Caco-2 (cell line): ENCODE measurements at regions of chr2 and their contacts with region 1.

Region 1: DNA sequence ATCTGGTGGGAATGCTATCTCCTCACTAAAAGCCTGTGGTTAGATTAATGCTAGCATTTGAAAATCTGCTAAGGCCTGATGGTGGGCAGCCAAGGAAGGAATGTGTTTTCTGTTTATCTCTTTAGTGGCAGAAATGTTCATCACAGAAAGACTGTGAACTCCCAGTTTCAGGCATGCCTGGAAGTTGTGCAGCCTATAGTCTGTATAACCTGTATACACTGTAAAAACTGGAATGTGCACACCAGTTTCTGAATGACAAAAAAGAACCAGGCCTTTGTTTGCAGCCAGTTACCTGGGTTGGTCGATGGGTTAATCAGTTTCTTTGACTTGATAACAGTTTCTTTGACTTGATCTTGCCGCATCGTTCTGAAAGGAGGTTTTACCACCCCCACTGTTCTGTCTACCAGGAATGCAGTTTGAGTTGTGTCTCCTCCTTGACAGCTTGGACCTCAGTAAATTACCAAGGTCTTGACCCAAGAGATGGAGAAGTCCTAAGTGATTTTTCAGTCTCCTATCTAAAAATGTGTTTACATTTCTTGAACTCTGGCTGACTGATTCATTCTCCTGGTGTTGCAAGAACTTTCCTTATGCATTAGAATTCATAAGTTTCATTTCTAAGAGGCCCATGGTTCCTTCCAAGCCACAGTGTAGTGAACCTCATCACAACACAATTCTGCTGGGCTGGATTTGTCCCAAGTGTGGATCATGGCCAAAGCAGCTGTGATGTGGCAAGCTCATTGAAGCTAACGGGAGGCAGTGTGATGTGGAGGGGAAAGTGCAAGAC is 62.2 kb downstream of the KIAA2012 start:
- DNase-seq: peak; percentile 92 to 94
- H3K4me3 ChIP-seq: no peak overlapping the region
- H3K4me3 Mint-ChIP-seq: peak overlapping the region; percentile 61
- H3K27ac Mint-ChIP-seq: peak overlapping the region; percentile 95
- H3K4me1 ChIP-seq: peaks cover 36% of the 10 kb centered on the region
- H3K4me1 Mint-ChIP-seq: peaks cover 24% of the 10 kb centered on the region
- H3K27me3 ChIP-seq: no peaks in the 10 kb centered on the region
- H3K27me3 Mint-ChIP-seq: no peaks in the 10 kb centered on the region
- CTCF ChIP-seq: peak in 1 of 2 experiments; percentile 18

Region 2: DNA sequence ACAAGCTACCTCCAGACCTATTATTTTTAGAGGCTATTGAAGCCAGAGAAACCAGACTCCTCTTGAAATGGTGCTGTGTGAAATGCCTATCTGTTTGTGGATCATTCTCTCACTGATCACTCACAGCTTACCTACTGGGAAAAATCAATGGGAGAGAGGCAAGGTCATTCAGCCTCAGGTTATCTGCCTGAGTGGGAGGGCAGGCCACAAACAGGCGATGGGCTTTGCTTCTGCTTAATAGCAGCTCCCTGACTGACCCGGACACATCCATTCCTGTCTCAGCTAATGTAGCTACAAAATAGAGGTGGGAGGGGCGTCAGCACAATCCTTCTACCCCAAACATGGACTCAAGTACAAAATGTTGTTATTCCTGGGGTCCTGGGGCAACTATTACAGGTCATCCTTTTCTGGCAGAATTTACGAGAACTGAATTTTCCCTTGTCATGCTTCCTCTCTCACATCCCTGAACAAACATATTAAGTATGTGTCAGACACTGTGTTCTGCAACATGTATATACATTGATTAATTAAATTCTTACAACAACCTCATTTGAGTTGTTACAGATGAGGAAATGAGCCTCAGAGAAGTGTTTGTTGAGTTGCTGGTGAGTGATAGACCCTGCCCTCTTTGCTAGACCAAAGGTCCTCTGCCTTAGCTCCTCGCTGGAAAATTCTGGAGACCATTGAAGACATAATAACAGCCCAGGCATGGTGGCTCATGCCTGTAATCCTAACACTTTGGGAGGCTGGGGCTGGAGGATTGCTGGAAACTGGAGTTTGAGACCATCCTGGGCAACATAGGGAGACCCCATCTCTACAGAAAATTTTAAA is 268.4 kb before region 1 on chr2:
- CTCF ChIA-PET with region 1: no interaction called
- POLR2A ChIA-PET with region 1: interaction called, 3 read pairs
- intact Hi-C with region 1: loop called (anchors 1 kb)
- DNase-seq: peak; percentile 43 to 75
- H3K4me3 ChIP-seq: no peak overlapping the region
- H3K4me3 Mint-ChIP-seq: peak overlapping the region; percentile 43
- H3K27ac Mint-ChIP-seq: peak overlapping the region; percentile 80
- H3K4me1 ChIP-seq: peaks cover 33% of the 10 kb centered on the region
- H3K4me1 Mint-ChIP-seq: peaks cover 36% of the 10 kb centered on the region
- H3K27me3 ChIP-seq: no peaks in the 10 kb centered on the region
- H3K27me3 Mint-ChIP-seq: no peaks in the 10 kb centered on the region
- CTCF ChIP-seq: no peak

Region 3: GRCh38 chr2:201971531-201972228 is 163.6 kb before region 1 on chr2:
- CTCF ChIA-PET with region 1: no interaction called
- POLR2A ChIA-PET with region 1: no interaction called
- intact Hi-C with region 1: no loop called
- DNase-seq: no peak
- H3K4me3 ChIP-seq: no peak overlapping the region
- H3K4me3 Mint-ChIP-seq: no peak overlapping the region
- H3K27ac Mint-ChIP-seq: no peak overlapping the region
- H3K4me1 ChIP-seq: peaks cover 34% of the 10 kb centered on the region
- H3K4me1 Mint-ChIP-seq: peaks cover 30% of the 10 kb centered on the region
- H3K27me3 ChIP-seq: no peaks in the 10 kb centered on the region
- H3K27me3 Mint-ChIP-seq: no peaks in the 10 kb centered on the region
- CTCF ChIP-seq: no peak

Region 4: DNA sequence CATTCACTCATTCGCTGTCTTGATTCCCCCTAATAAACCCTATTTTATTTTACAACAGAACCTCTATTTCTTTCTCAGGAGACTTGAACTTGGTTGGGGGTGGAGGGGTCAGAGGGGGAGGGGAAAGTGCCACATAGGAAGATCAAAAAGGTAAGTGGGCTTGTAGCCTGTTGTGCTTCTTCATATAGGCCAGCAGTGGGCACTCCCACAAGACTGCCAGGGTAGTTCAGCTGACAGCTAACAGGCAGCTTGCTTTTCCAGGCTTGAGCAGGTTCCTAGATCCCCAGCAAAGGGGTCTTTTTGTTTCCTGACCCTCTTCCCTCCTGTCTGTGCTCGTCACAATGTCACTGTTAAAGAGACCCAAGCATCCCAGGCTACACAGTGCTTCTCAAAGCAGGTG is 63.1 kb before region 1 on chr2:
- CTCF ChIA-PET with region 1: no interaction called
- POLR2A ChIA-PET with region 1: no interaction called
- intact Hi-C with region 1: loop called (anchors 1 kb)
- DNase-seq: peak in 1 of 2 experiments; percentile 18
- H3K4me3 ChIP-seq: no peak overlapping the region
- H3K4me3 Mint-ChIP-seq: no peak overlapping the region
- H3K27ac Mint-ChIP-seq: no peak overlapping the region
- H3K4me1 ChIP-seq: no peaks in the 10 kb centered on the region
- H3K4me1 Mint-ChIP-seq: no peaks in the 10 kb centered on the region
- H3K27me3 ChIP-seq: no peaks in the 10 kb centered on the region
- H3K27me3 Mint-ChIP-seq: no peaks in the 10 kb centered on the region
- CTCF ChIP-seq: peak; percentile 28 to 43

Region 5: GRCh38 chr2:202104278-202104870 is 30.9 kb before region 1 on chr2:
- CTCF ChIA-PET with region 1: no interaction called
- POLR2A ChIA-PET with region 1: no interaction called
- intact Hi-C with region 1: loop called (anchors 1 kb)
- DNase-seq: peak; percentile 78 to 85
- H3K4me3 ChIP-seq: no peak overlapping the region
- H3K4me3 Mint-ChIP-seq: no peak overlapping the region
- H3K27ac Mint-ChIP-seq: peak overlapping the region; percentile 27
- H3K4me1 ChIP-seq: no peaks in the 10 kb centered on the region
- H3K4me1 Mint-ChIP-seq: no peaks in the 10 kb centered on the region
- H3K27me3 ChIP-seq: no peaks in the 10 kb centered on the region
- H3K27me3 Mint-ChIP-seq: no peaks in the 10 kb centered on the region
- CTCF ChIP-seq: peak; percentile 77 to 81

Region 6: GRCh38 chr2:202113571-202114144 is 21.6 kb before region 1 on chr2:
- CTCF ChIA-PET with region 1: no interaction called
- POLR2A ChIA-PET with region 1: no interaction called
- intact Hi-C with region 1: loop called (anchors 2 kb)
- DNase-seq: no peak
- H3K4me3 ChIP-seq: no peak overlapping the region
- H3K4me3 Mint-ChIP-seq: no peak overlapping the region
- H3K27ac Mint-ChIP-seq: no peak overlapping the region
- H3K4me1 ChIP-seq: peaks cover 19% of the 10 kb centered on the region
- H3K4me1 Mint-ChIP-seq: peaks cover 26% of the 10 kb centered on the region
- H3K27me3 ChIP-seq: no peaks in the 10 kb centered on the region
- H3K27me3 Mint-ChIP-seq: no peaks in the 10 kb centered on the region
- CTCF ChIP-seq: no peak

Region 7: GRCh38 chr2:202164411-202164810 is 29.1 kb after region 1 on chr2:
- CTCF ChIA-PET with region 1: interaction called, 6 read pairs
- POLR2A ChIA-PET with region 1: no interaction called
- intact Hi-C with region 1: loop called (anchors 1 kb)
- DNase-seq: peak; percentile 39 to 51
- H3K4me3 ChIP-seq: no peak overlapping the region
- H3K4me3 Mint-ChIP-seq: no peak overlapping the region
- H3K27ac Mint-ChIP-seq: peak overlapping the region; percentile 34
- H3K4me1 ChIP-seq: peaks cover 24% of the 10 kb centered on the region
- H3K4me1 Mint-ChIP-seq: peaks cover 24% of the 10 kb centered on the region
- H3K27me3 ChIP-seq: no peaks in the 10 kb centered on the region
- H3K27me3 Mint-ChIP-seq: no peaks in the 10 kb centered on the region
- CTCF ChIP-seq: no peak